ENCODE measurements at regions of chr18 and their contacts with region 1.

Region 1: GRCh38 chr18:44186001-44186400 is 494.7 kb upstream of the SETBP1 start:
- DNase-seq: no peak
- H3K4me3 Mint-ChIP-seq: no peak overlapping the region
- H3K27ac Mint-ChIP-seq: no peak overlapping the region
- H3K4me1 Mint-ChIP-seq: peaks cover 25% of the 10 kb centered on the region
- H3K27me3 Mint-ChIP-seq: no peaks in the 10 kb centered on the region
- CTCF ChIP-seq: no peak

Region 2: GRCh38 chr18:43772907-43773306 is 413.1 kb before region 1 on chr18:
- CTCF ChIA-PET with region 1: no interaction called
- intact Hi-C with region 1: no loop called
- DNase-seq: no peak
- H3K4me3 Mint-ChIP-seq: no peak overlapping the region
- H3K27ac Mint-ChIP-seq: no peak overlapping the region
- H3K4me1 Mint-ChIP-seq: peaks cover 13% of the 10 kb centered on the region
- H3K27me3 Mint-ChIP-seq: no peaks in the 10 kb centered on the region
- CTCF ChIP-seq: no peak

Region 3: GRCh38 chr18:45441110-45441842 is 1255.3 kb after region 1 on chr18:
- CTCF ChIA-PET with region 1: no interaction called
- intact Hi-C with region 1: loop called (anchors 5 kb)
- DNase-seq: peak; percentile 12
- H3K4me3 Mint-ChIP-seq: no peak overlapping the region
- H3K27ac Mint-ChIP-seq: no peak overlapping the region
- H3K4me1 Mint-ChIP-seq: peaks cover 11% of the 10 kb centered on the region
- H3K27me3 Mint-ChIP-seq: peaks cover 38% of the 10 kb centered on the region
- CTCF ChIP-seq: peak; percentile 31

Measured in Calu3 (cell line).